Naive thymus-derived CD4-positive, alpha-beta T cell (primary cell): ENCODE measurements at regions of chr7 and their contacts with region 1.

Region 1: DNA sequence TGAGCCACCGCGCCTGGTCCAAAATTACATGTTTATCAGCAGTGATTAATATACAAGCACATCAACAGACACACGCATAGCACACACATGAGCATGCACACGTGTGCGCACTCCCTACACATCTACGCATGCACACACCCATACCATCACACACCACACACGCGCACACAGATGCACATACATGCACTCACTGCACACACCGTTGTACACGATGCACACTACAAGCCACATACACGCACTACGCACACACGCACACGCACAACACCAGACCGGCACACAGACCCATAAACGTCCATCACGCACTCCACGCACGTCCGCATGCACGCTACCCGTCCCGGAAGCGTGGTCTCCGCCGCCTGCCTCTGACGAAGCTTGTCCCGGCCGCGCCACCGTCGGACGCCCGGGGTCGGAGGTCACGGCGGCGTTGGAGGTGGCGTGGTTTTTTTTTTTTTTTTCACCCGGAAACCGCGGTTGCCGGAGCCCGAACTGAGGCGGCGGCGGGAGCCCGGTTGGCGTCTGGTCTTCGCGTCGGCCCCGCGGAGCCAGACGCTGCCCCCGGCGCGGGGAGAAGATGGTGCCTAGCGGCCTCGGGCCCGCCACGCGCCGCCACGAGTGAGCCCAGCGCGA is at the start of gene TMEM248:
- DNase-seq: peak; percentile 87 to 97 (median 94)
- ATAC-seq: peak; percentile 95
- H3K4me3 ChIP-seq: peak within 1 kb of the TSS; percentile 80
- H3K4me3 Mint-ChIP-seq: peak within 1 kb of the TSS; percentile 91 to 100 (median 98)
- H3K27ac ChIP-seq: peak within 1 kb of the TSS; percentile 93
- H3K27ac Mint-ChIP-seq: peak within 1 kb of the TSS; percentile 96 to 100 (median 98)
- H3K4me1 ChIP-seq: peaks cover 18 to 20% of the 10 kb centered on the region in 2 donors
- H3K4me1 Mint-ChIP-seq: peaks cover 14 to 49% (median 37%) of the 10 kb centered on the region in 7 donors
- H3K27me3 ChIP-seq: no peaks in the 10 kb centered on the region
- H3K27me3 Mint-ChIP-seq: no peaks in the 10 kb centered on the region
- total RNA-seq, gene TMEM248: 81.0 to 107 (median 91.6) TPM

Region 2: DNA sequence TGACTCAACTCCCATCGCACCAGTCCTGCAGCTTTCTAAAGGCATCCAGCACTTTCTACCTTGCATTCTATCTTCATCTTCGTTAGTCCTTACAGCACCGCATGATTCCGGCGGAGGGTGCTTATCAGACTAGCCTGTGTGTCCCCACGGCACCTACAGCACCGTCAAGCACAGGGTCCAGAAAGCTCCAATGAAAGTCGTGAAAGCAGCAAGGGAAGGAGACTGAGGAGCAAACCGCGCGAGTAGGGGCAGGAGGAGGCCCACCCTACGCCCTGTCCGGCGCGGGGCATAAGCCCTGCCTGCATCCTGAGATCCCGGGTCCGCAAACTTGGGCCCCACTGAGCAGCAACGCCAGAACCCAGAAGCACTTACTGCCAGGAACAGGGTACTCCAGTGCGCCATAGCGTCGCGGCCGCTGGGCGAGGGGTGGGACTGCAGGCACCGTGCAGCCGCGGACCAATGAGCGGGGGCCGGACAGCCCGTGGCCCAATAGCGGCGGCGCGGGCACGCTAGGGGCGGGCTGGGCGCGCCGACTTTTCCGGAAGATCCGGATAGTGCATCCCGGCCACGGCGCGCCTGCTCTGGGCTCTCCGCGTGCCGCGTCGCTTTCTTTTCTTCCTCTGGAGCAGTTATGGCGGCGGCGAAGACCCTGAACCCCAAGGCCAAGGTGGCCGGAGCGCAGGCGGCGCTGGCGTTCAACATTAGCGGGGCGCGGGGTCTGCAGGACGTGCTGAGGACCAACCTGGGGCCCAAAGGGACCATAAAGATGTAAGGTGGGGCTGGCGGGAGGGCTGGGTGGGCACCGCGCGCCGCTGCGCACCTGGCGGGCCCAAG is 1170.2 kb before region 1 on chr7:
- CTCF ChIA-PET with region 1: no interaction called
- POLR2A ChIA-PET with region 1: no interaction called
- intact Hi-C with region 1: loop called in 1 of 2 experiments (anchors 2 kb)
- DNase-seq: peak; percentile 76 to 91 (median 80)
- ATAC-seq: peak; percentile 99
- H3K4me3 ChIP-seq: peak overlapping the region; percentile 97
- H3K4me3 Mint-ChIP-seq: peak overlapping the region; percentile 90 to 100 (median 98)
- H3K27ac ChIP-seq: peak overlapping the region; percentile 85
- H3K27ac Mint-ChIP-seq: peak overlapping the region; percentile 75 to 95 (median 87)
- H3K4me1 ChIP-seq: peaks cover 6 to 7% of the 10 kb centered on the region in 2 donors
- H3K4me1 Mint-ChIP-seq: peaks cover 0 to 35% (median 20%) of the 10 kb centered on the region in 7 donors
- H3K27me3 ChIP-seq: no peaks in the 10 kb centered on the region
- H3K27me3 Mint-ChIP-seq: no peaks in the 10 kb centered on the region

Region 3: DNA sequence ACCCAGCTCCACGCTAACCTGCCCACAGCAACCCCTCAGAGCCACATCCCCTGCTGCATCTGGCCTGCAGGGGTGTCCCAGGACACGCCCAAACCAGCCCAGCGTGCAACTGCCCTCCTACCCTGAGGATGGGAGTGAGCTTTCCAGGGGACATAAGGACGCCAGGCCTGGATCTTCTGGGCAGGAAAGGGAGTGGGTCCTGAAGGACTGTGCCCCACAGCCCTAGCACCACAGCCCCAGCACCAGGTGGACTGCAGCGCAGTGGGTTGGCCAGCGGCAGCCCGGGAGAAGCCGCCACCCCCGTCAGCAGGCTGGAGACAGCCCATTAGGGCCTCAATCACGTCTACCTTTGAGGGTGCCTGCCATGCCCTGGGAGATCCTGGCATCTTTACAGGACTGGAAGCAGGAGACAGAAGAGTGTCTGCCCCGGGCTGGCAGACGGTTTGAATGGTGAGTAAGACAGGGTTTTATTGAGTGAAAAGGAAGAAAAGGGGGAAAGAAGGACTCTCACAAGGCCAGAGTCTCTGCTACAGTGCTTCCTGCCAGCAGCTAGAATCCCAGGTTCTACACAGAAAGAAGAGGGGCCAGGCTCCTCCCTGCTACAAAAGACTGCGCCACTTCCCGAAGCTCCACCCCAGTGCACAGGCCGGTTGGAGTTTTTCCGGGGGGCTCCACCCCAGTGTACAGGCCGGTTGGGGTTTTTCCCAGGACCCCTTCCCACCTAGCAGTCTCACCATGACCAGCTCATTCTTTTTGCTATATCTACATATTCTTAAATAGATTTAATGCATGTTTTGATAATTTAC is 362.0 kb before region 1 on chr7:
- CTCF ChIA-PET with region 1: no interaction called
- POLR2A ChIA-PET with region 1: no interaction called
- intact Hi-C with region 1: no loop called
- DNase-seq: no peak
- ATAC-seq: peak; percentile 9
- H3K4me3 ChIP-seq: no peak overlapping the region
- H3K4me3 Mint-ChIP-seq: no peak overlapping the region
- H3K27ac ChIP-seq: no peak overlapping the region
- H3K27ac Mint-ChIP-seq: no peak overlapping the region
- H3K4me1 ChIP-seq: peaks cover 0 to 4% of the 10 kb centered on the region in 2 donors
- H3K4me1 Mint-ChIP-seq: peaks cover 0 to 9% (median 4%) of the 10 kb centered on the region in 7 donors
- H3K27me3 ChIP-seq: no peaks in the 10 kb centered on the region
- H3K27me3 Mint-ChIP-seq: no peaks in the 10 kb centered on the region

Region 4: GRCh38 chr7:66591799-66592596 is 328.9 kb before region 1 on chr7:
- CTCF ChIA-PET with region 1: no interaction called
- POLR2A ChIA-PET with region 1: no interaction called
- intact Hi-C with region 1: loop called (anchors 1 to 2 kb)
- DNase-seq: peak; percentile 65 to 90 (median 88)
- ATAC-seq: peak; percentile 98
- H3K4me3 ChIP-seq: peak overlapping the region; percentile 88
- H3K4me3 Mint-ChIP-seq: peak overlapping the region; percentile 95 to 99 (median 98)
- H3K27ac ChIP-seq: peak overlapping the region; percentile 82
- H3K27ac Mint-ChIP-seq: peak overlapping the region; percentile 88 to 99 (median 97)
- H3K4me1 ChIP-seq: peaks cover 8 to 16% of the 10 kb centered on the region in 2 donors
- H3K4me1 Mint-ChIP-seq: peaks cover 33 to 69% (median 53%) of the 10 kb centered on the region in 7 donors
- H3K27me3 ChIP-seq: no peaks in the 10 kb centered on the region
- H3K27me3 Mint-ChIP-seq: no peaks in the 10 kb centered on the region

Region 5: GRCh38 chr7:66654123-66654732 is 266.7 kb before region 1 on chr7:
- CTCF ChIA-PET with region 1: no interaction called
- POLR2A ChIA-PET with region 1: no interaction called
- intact Hi-C with region 1: loop called (anchors 1 to 5 kb)
- DNase-seq: peak; percentile 96 to 99 (median 97)
- ATAC-seq: peak; percentile 95
- H3K4me3 ChIP-seq: peak overlapping the region; percentile 94
- H3K4me3 Mint-ChIP-seq: peak overlapping the region; percentile 91 to 99 (median 98)
- H3K27ac ChIP-seq: peak overlapping the region; percentile 99
- H3K27ac Mint-ChIP-seq: peak overlapping the region; percentile 94 to 99 (median 98)
- H3K4me1 ChIP-seq: peaks cover 8% of the 10 kb centered on the region in 2 donors
- H3K4me1 Mint-ChIP-seq: peaks cover 17 to 56% (median 39%) of the 10 kb centered on the region in 7 donors
- H3K27me3 ChIP-seq: no peaks in the 10 kb centered on the region
- H3K27me3 Mint-ChIP-seq: no peaks in the 10 kb centered on the region

Region 6: DNA sequence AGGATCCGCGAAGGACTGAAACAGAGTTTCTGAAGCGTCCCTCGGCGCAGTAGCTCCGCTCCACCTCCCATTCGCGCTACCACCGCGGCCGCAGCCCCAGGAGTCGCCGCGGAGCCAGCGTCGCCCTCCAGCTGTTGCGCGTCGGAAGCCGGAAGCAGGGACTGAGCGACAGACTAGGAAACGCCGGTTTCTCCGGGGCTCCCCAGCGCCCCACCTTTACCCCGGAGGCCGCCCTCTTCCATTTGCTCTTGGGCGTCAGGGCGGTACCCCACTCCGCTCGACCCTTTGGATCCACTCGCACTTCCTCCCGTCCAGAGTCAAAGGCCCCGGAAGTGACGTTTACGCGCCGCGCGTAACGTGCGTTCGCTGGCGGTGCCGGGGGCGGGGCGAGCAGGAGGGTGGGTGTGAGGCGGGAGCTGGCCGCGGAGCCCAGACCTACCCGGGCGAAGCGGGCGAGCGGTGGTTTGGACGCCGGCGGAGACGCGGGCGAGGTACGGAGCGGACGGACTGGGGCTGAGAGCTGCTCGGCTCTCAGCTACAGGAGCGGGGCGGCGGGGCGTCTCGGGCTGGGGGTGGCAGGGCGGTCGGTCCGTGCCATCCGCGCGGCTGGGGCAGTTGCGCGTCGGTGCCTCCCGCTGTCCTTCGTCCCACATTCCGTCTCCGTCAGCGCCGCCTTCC is 180.4 kb before region 1 on chr7 and contains the start of gene RABGEF1:
- CTCF ChIA-PET with region 1: no interaction called
- POLR2A ChIA-PET with region 1: no interaction called
- intact Hi-C with region 1: loop called (anchors 1 kb)
- DNase-seq: peak; percentile 94 to 98 (median 95)
- ATAC-seq: peak; percentile 95
- H3K4me3 ChIP-seq: peak within 1 kb of the TSS; percentile 82
- H3K4me3 Mint-ChIP-seq: peak within 1 kb of the TSS; percentile 89 to 98 (median 94)
- H3K27ac ChIP-seq: peak within 1 kb of the TSS; percentile 84
- H3K27ac Mint-ChIP-seq: peak within 1 kb of the TSS; percentile 94 to 98 (median 96)
- H3K4me1 ChIP-seq: peaks cover 0 to 6% of the 10 kb centered on the region in 2 donors
- H3K4me1 Mint-ChIP-seq: peaks cover 30 to 74% (median 54%) of the 10 kb centered on the region in 7 donors
- H3K27me3 ChIP-seq: no peaks in the 10 kb centered on the region
- H3K27me3 Mint-ChIP-seq: no peaks in the 10 kb centered on the region
- total RNA-seq, gene RABGEF1: 20.7 to 35.7 (median 22.2) TPM

Region 7: DNA sequence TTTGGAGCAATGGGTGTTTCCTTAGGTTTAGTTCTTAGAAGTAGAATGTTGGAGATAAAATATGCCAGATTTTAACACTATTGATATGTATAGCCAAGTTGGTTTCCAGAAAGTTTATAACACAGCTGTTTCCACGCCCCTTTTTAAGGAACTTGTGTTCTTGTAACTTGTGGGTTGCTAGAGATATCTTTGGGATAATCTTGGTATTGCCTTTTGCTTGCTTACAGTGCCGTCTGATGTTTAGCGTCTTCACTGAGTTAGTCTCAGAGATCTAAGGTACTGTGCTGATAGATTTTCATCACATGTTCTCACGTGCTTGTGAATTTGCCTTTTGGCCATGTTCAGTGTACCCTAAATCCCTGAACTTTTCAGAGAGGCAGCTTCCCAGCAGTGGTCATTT is 12.6 kb after region 1 on chr7:
- CTCF ChIA-PET with region 1: no interaction called
- POLR2A ChIA-PET with region 1: interaction called, 10 read pairs
- intact Hi-C with region 1: no loop called
- DNase-seq: no peak
- ATAC-seq: no peak
- H3K4me3 ChIP-seq: no peak overlapping the region
- H3K4me3 Mint-ChIP-seq: peak overlapping the region in 7 of 10 donors; percentile 29 to 64 (median 59)
- H3K27ac ChIP-seq: no peak overlapping the region
- H3K27ac Mint-ChIP-seq: peak overlapping the region in 7 of 9 donors; percentile 26 to 86 (median 56)
- H3K4me1 ChIP-seq: peaks cover 8 to 32% of the 10 kb centered on the region in 2 donors
- H3K4me1 Mint-ChIP-seq: peaks cover 49 to 91% (median 75%) of the 10 kb centered on the region in 7 donors
- H3K27me3 ChIP-seq: no peaks in the 10 kb centered on the region
- H3K27me3 Mint-ChIP-seq: no peaks in the 10 kb centered on the region